Activated naive CD4-positive, alpha-beta T cell treated with anti-CD3 and anti-CD28 coated beads for 36 hours (primary cell): ENCODE measurements at regions of chr20 and their contacts with region 1.

Region 1: DNA sequence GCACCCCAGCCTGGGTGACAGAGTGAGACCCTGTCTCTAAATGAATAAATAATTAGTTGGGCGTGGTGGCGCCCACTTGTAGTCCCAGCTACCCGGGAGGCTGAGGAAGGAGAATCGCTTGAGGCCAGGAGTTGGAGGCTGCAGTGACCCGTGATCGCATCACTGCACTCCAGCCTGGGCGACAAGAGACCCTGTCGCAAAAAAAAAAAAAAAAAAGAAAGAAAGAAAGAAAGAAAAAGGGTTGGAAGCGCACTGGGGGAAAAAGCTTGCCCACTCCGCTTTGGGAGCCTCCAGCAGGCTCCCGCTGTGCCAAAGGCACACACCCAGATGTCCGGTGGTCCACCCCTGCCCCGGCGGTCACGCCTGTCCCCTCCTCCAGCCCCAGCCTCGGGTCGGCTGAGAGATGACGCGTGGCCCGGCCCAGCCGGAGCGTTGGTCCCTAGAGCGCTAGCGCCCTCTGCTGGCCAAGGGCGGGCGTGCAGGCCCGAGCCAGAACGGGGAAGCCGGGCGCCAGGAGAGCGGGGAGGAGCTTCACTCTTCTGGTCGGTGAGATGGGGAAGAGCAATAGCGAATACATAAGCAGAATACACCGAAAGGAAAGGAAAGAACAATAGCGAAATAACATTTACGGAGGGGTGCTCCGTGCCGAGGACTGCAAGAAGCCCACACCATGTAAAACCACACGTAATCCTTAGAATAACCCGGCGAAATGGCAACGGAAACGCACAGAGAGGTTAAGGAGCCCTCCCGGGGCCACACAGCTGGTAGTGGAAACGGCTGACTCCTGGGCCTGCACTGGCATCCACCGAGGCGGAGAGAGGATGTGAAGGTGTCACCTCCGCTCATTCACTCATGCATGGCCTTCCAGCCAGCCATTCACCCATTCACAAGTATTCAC is 41.7 kb downstream of the UBE2V1 start:
- DNase-seq: peak; percentile 92
- H3K4me3 Mint-ChIP-seq: peak overlapping the region; percentile 71
- H3K27ac Mint-ChIP-seq: no peak overlapping the region
- H3K4me1 Mint-ChIP-seq: peaks cover 5% of the 10 kb centered on the region
- H3K27me3 Mint-ChIP-seq: no peaks in the 10 kb centered on the region

Region 2: DNA sequence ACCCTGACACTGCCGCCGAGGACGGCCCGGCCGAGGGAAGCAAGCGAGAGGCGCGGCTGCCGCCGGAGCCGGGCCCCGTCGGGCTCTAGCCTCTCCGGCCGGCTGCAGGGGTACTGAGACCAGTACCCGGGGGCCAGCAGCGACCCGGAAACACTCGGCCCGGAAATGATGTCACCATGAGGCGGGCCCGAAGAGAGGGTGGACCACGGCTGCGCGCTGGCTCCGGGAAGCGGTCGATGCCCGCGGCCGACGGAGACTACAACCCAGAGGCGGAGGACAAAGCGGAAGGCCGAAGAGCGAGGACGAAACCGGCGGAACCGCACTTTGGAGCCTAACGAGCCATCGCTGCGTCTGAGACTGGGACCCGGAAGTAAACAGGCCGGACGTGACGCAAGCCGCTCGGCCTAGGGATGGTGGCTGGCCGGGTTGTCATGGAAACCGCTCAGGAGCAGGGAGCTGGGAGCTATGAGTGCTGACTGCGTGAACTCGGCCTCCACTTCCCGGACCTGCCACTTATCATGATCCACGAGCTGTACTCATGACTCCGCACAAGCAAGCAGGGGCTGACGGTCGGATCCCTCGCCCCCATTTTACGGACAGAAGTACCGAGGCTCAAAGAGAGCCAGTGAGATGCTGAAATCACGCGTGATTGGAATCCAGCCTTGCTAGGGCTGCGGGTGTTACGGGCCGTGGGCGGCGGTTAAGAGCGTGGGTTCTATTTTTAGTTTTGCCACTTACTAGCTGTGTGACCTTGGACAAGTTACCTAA is 155.7 kb before region 1 on chr20 and contains the start of gene SPATA2:
- CTCF ChIA-PET with region 1: interaction called, 17 read pairs
- intact Hi-C with region 1: no loop called
- DNase-seq: peak; percentile 93
- H3K4me3 Mint-ChIP-seq: peak within 1 kb of the TSS; percentile 99
- H3K27ac Mint-ChIP-seq: peak within 1 kb of the TSS; percentile 100
- H3K4me1 Mint-ChIP-seq: peaks cover 34% of the 10 kb centered on the region
- H3K27me3 Mint-ChIP-seq: no peaks in the 10 kb centered on the region
- total RNA-seq, gene SPATA2: 6.6 to 7.3 TPM

Region 3: GRCh38 chr20:49982346-49983122 is 88.7 kb before region 1 on chr20 and contains the start of gene SNAI1:
- CTCF ChIA-PET with region 1: interaction called, 248 read pairs
- intact Hi-C with region 1: loop called (anchors 1 kb)
- DNase-seq: peak; percentile 75
- H3K4me3 Mint-ChIP-seq: peak within 1 kb of the TSS; percentile 48
- H3K27ac Mint-ChIP-seq: no peak within 1 kb of the TSS
- H3K4me1 Mint-ChIP-seq: peaks cover 20% of the 10 kb centered on the region
- H3K27me3 Mint-ChIP-seq: peaks cover 3% of the 10 kb centered on the region
- total RNA-seq, gene SNAI1: 0.31 TPM in 1 of 2 experiments, not detected in the other

Region 4: GRCh38 chr20:50085452-50086365 is 14.5 kb after region 1 on chr20:
- CTCF ChIA-PET with region 1: interaction called, 38 read pairs
- intact Hi-C with region 1: no loop called
- DNase-seq: peak; percentile 58
- H3K4me3 Mint-ChIP-seq: peak overlapping the region; percentile 5
- H3K27ac Mint-ChIP-seq: peak overlapping the region; percentile 11
- H3K4me1 Mint-ChIP-seq: peaks cover 28% of the 10 kb centered on the region
- H3K27me3 Mint-ChIP-seq: no peaks in the 10 kb centered on the region

Region 5: GRCh38 chr20:50165684-50166554 is 94.7 kb after region 1 on chr20:
- CTCF ChIA-PET with region 1: interaction called, 11 read pairs
- intact Hi-C with region 1: loop called (anchors 2 kb)
- DNase-seq: peak; percentile 97
- H3K4me3 Mint-ChIP-seq: peak overlapping the region; percentile 65
- H3K27ac Mint-ChIP-seq: peak overlapping the region; percentile 63
- H3K4me1 Mint-ChIP-seq: peaks cover 11% of the 10 kb centered on the region
- H3K27me3 Mint-ChIP-seq: peaks cover 2% of the 10 kb centered on the region

Region 6: GRCh38 chr20:50179507-50180016 is 108.3 kb after region 1 on chr20:
- CTCF ChIA-PET with region 1: interaction called, 7 read pairs
- intact Hi-C with region 1: loop called (anchors 1 kb)
- DNase-seq: no peak
- H3K4me3 Mint-ChIP-seq: no peak overlapping the region
- H3K27ac Mint-ChIP-seq: no peak overlapping the region
- H3K4me1 Mint-ChIP-seq: no peaks in the 10 kb centered on the region
- H3K27me3 Mint-ChIP-seq: peaks cover 9% of the 10 kb centered on the region